Activated CD8-positive, alpha-beta T cell treated with anti-CD3 and anti-CD28 coated beads, Interleukin-2, amount 10 ng/mL, durations not matched to agents 7 days and 5 days (primary cell): ENCODE measurements at regions of chr2 and their contacts with region 1.

Region 1: GRCh38 chr2:47520825-47521665 is 118.1 kb downstream of the MSH2 start:
- DNase-seq: peak; percentile 85
- ATAC-seq: peak; percentile 92
- H3K4me3 Mint-ChIP-seq: peak overlapping the region; percentile 81
- H3K27ac Mint-ChIP-seq: peak overlapping the region; percentile 94
- H3K4me1 Mint-ChIP-seq: peaks cover 36% of the 10 kb centered on the region
- H3K27me3 Mint-ChIP-seq: peaks cover 2% of the 10 kb centered on the region

Region 2: GRCh38 chr2:47486841-47487497 is 34.1 kb before region 1 on chr2:
- CTCF ChIA-PET with region 1: interaction called, 8 read pairs
- POLR2A ChIA-PET with region 1: interaction called, 11 read pairs
- DNase-seq: peak; percentile 47
- ATAC-seq: peak; percentile 79
- H3K4me3 Mint-ChIP-seq: no peak overlapping the region
- H3K27ac Mint-ChIP-seq: peak overlapping the region; percentile 77
- H3K4me1 Mint-ChIP-seq: peaks cover 21% of the 10 kb centered on the region
- H3K27me3 Mint-ChIP-seq: no peaks in the 10 kb centered on the region

Region 3: DNA sequence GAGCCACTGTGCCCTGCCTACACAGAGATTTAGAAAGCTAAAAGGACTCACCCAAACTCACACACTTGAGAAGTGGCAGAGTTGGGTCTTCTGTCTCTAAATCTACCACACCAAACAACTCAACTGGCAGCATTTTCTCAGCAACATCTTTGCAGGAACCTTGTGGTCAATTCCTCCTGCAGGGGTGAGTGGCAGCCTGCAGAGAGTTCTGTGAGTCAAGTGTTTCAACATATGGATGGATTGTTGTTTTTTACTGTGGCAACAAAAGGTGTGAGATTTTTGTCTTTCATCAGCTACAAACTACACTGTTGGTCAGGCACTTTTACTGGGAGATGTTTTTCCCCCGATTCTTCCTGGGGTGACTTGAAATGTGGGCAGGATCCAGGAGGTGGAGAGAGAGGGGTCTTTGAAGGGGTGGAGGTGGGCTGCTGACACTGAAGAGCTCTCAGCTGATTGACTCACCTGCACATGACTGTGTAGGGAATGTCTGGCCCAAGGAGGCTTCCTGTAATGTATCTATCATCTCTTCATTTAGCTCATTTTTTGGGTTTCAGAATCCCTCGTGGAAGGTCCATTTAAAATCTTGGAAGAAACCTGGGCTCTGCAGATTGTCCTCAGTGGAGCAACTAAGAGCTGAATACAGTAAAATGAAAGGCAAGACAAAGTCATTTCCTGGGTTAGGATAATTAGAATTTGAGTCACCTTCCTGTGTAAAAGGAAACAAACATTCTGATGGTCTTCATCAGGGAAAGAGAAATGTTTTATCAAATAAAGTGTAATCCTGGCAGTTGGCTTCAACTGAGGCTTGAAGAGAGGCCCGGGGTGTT is 19.5 kb before region 1 on chr2:
- CTCF ChIA-PET with region 1: interaction called, 13 read pairs
- POLR2A ChIA-PET with region 1: interaction called, 5 read pairs
- DNase-seq: peak; percentile 36
- ATAC-seq: peak; percentile 42
- H3K4me3 Mint-ChIP-seq: peak overlapping the region; percentile 42
- H3K27ac Mint-ChIP-seq: peak overlapping the region; percentile 92
- H3K4me1 Mint-ChIP-seq: peaks cover 20% of the 10 kb centered on the region
- H3K27me3 Mint-ChIP-seq: no peaks in the 10 kb centered on the region

Region 4: DNA sequence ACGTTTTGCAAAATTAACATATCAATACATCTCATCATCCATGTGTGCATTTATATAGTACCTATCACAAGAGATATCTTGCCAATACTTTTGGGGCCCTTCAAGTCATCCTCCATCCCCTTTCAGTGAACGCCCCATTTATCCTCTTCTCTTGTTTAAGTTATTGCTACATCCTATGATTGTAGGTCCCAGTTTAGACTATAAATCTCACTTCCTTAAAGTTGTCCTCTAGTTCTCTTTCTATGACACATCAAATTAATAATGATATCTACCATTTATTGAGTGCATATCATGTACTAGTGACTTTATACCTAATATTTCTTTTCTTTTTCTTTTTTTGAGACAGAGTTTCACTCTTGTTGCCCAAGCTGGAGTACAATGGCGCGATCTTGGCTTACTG is 414.0 kb after region 1 on chr2:
- CTCF ChIA-PET with region 1: no interaction called
- POLR2A ChIA-PET with region 1: no interaction called
- DNase-seq: no peak
- ATAC-seq: no peak
- H3K4me3 Mint-ChIP-seq: no peak overlapping the region
- H3K27ac Mint-ChIP-seq: no peak overlapping the region
- H3K4me1 Mint-ChIP-seq: no peaks in the 10 kb centered on the region
- H3K27me3 Mint-ChIP-seq: peaks cover 7% of the 10 kb centered on the region